Testis (tissue), 5 donors: ENCODE measurements at regions of chr5 and their contacts with region 1.

Region 1: DNA sequence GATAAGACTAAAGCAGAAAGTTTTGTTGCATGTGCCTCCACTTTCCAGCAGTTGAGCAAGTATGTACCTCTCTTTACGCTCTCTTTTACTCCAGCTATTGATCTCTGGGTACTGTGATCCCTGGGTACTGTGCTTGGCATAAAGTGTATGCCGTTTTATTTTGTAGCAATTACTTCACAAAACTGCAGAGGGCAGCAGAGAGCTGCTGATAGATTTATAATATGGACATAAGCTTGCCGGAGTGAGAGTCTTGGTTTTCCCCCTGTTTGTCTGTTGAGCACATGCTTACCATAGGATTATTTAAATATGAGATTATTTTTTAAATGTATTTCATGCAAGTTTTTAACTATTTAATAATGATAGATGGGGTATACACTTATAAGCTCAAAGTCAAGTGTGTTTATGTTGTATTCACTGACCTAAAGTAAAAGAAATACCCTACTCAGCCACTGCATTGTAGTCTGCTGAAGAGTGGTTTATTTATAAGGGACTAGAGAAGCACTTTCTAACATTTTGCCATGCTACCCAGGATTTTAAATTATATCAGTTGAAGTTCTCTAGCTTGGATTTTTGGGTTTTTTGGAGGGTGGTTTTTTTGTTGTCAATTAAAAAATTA is 13.0 kb downstream of the TTC1 start:
- DNase-seq: peak; percentile 66
- H3K4me3 ChIP-seq: no peak overlapping the region
- H3K27ac ChIP-seq: no peak overlapping the region
- H3K4me1 ChIP-seq: no peaks in the 10 kb centered on the region
- H3K27me3 ChIP-seq: no peaks in the 10 kb centered on the region
- CTCF ChIP-seq: peak; percentile 78 to 92 (median 87)
- POLR2A ChIP-seq: no peak

Region 2: GRCh38 chr5:159620853-159621540 is 400.9 kb before region 1 on chr5:
- intact Hi-C with region 1: no loop called
- DNase-seq: no peak
- H3K4me3 ChIP-seq: no peak overlapping the region
- H3K27ac ChIP-seq: no peak overlapping the region
- H3K4me1 ChIP-seq: no peaks in the 10 kb centered on the region
- H3K27me3 ChIP-seq: no peaks in the 10 kb centered on the region
- CTCF ChIP-seq: no peak
- POLR2A ChIP-seq: no peak

Region 3: GRCh38 chr5:160199410-160199911 is 177.5 kb after region 1 on chr5:
- intact Hi-C with region 1: loop called (anchors 10 kb)
- DNase-seq: peak; percentile 83
- H3K4me3 ChIP-seq: peak overlapping the region; percentile 21 to 45
- H3K27ac ChIP-seq: peak overlapping the region; percentile 66 to 72
- H3K4me1 ChIP-seq: peaks cover 31% of the 10 kb centered on the region
- H3K27me3 ChIP-seq: no peaks in the 10 kb centered on the region
- CTCF ChIP-seq: peak; percentile 94 to 98 (median 96)
- POLR2A ChIP-seq: no peak